Endothelial cell of umbilical vein (primary cell): ENCODE measurements at regions of chr12 and their contacts with region 1.

Region 1: DNA sequence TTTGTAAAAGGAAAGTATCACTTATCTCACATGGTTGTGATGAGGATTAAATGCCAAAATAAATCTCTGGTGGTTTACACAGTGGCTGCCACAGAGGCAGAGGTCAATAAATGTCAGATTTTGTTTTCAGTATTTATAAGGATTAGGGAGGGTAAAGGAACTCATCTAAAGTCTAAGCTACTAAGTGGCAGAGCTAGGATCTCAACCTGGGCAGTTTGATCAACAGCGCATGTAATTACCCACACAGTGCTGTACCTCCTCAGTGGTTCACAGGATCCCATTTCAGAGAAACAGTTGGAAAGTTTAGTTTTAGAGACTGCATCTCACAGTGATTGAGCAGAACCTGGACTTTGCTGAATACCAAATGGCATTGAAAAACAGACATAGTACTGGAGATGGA is 44.9 kb upstream of the RIC8B start:
- DNase-seq: no peak
- H3K4me3 ChIP-seq: no peak overlapping the region
- H3K27ac ChIP-seq: no peak overlapping the region
- H3K4me1 ChIP-seq: no peaks in the 10 kb centered on the region
- H3K27me3 ChIP-seq: no peaks in the 10 kb centered on the region
- CTCF ChIP-seq: no peak
- POLR2A ChIP-seq: no peak

Region 2: DNA sequence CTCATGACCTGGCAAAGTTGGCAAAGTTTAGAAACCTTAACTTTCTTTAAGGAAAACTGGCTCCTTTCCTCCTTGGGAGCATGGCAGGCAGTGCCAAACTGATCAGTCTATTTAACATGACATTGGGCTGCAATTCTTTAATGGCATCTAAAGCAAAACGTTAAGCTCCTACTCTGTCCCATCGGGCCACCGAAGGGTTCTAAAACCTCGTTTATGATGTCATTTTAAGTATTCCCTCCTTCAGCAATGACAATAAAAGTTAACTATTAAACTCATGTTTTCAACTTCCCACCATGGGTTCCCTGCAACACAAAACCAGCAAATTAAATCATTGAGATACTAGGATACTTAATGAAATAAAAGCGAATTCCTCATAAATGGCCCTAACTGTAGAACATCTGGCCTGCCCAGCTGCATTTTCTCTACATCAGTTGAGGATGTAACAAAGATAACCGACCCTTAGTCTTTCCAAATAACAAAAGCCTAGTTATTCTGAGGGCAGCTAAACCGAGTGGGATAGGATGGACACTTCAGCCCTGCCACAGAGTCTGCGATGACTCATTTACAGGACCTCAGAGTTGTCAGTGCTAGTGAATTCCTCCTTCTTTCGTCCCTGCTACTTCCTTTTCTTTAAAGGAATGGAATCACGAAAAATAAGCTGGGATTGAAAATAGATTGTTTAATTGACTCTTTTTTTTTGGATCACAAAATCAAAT is 10.4 kb after region 1 on chr12:
- CTCF ChIA-PET with region 1: interaction called, 12 read pairs
- POLR2A ChIA-PET with region 1: no interaction called
- dilution Hi-C with region 1: no loop called
- intact Hi-C with region 1: no loop called
- DNase-seq: no peak
- H3K4me3 ChIP-seq: no peak overlapping the region
- H3K27ac ChIP-seq: no peak overlapping the region
- H3K4me1 ChIP-seq: peaks cover 5% of the 10 kb centered on the region
- H3K27me3 ChIP-seq: peaks cover 13% of the 10 kb centered on the region in 2 experiments
- CTCF ChIP-seq: no peak
- POLR2A ChIP-seq: no peak

Region 3: GRCh38 chr12:106819991-106820390 is 90.4 kb after region 1 on chr12:
- CTCF ChIA-PET with region 1: no interaction called
- POLR2A ChIA-PET with region 1: no interaction called
- dilution Hi-C with region 1: no loop called
- intact Hi-C with region 1: no loop called
- DNase-seq: no peak
- H3K4me3 ChIP-seq: no peak overlapping the region
- H3K27ac ChIP-seq: no peak overlapping the region
- H3K4me1 ChIP-seq: no peaks in the 10 kb centered on the region
- H3K27me3 ChIP-seq: no peaks in the 10 kb centered on the region
- CTCF ChIP-seq: no peak
- POLR2A ChIP-seq: no peak